CD14-positive monocyte (primary cell): ENCODE measurements at regions of chr9 and their contacts with region 1.

Region 1: DNA sequence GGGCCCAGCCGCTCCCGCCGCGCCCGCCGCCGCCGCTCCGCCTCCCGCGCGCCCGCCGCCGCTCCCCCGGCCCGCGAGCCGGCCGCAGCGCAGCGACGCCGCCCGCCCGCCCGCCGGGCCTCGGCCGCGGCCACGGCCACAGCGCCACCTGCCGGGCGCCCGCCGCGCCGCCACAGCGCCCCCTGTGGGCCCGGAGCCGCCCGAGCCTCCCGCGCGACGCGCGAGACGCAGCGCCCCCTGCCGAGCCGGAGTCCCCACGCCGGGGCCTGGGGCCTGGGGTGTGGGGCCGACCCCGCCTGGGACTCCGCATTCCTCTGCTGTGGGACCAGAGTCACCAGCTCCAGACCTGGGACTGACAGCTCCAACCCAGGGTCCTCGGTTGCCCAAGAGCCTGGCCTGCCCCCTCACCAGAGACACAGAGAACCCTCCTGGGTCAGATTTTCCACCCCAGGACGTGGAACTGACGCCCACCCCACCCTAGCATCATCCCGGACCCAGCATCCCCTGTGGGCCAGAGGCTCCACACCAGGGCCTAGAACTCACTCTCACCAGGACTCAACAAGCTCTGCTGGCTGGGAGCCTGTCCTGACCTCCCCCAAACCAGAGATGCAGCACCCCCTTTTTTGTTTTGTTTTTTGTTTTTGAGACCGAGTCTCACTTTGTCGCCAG is at the start of gene RAPGEF1:
- DNase-seq: peak; percentile 58 to 80 (median 67)
- H3K4me3 ChIP-seq: peak within 1 kb of the TSS; percentile 52 to 86 (median 55)
- H3K4me3 Mint-ChIP-seq: peak within 1 kb of the TSS; percentile 97 to 98
- H3K27ac ChIP-seq: peak within 1 kb of the TSS; percentile 62 to 91
- H3K27ac Mint-ChIP-seq: peak within 1 kb of the TSS; percentile 84 to 95 (median 90)
- H3K4me1 ChIP-seq: peaks cover 64 to 66% of the 10 kb centered on the region in 2 donors
- H3K4me1 Mint-ChIP-seq: peaks cover 61% of the 10 kb centered on the region
- H3K27me3 ChIP-seq: no peaks in the 10 kb centered on the region
- H3K27me3 Mint-ChIP-seq: peaks cover 0 to 5% (median 0%) of the 10 kb centered on the region in 3 donors
- CTCF ChIP-seq: peak; percentile 94
- polyA plus RNA-seq, gene RAPGEF1: 1.7 to 71.7 (median 3.0) TPM

Region 2: GRCh38 chr9:131277910-131278701 is 462.0 kb before region 1 on chr9:
- intact Hi-C with region 1: loop called in 1 of 2 experiments (anchors 10 kb)
- DNase-seq: peak; percentile 67 to 72 (median 71)
- H3K4me3 ChIP-seq: peak overlapping the region; percentile 38 to 94 (median 93)
- H3K4me3 Mint-ChIP-seq: peak overlapping the region; percentile 81 to 82
- H3K27ac ChIP-seq: peak overlapping the region; percentile 76 to 93
- H3K27ac Mint-ChIP-seq: peak overlapping the region; percentile 77 to 93 (median 89)
- H3K4me1 ChIP-seq: peaks cover 43 to 50% of the 10 kb centered on the region in 2 donors
- H3K4me1 Mint-ChIP-seq: peaks cover 49% of the 10 kb centered on the region
- H3K27me3 ChIP-seq: peaks cover 7 to 26% of the 10 kb centered on the region in 2 donors
- H3K27me3 Mint-ChIP-seq: peaks cover 20 to 27% (median 26%) of the 10 kb centered on the region in 3 donors
- CTCF ChIP-seq: no peak

Region 3: GRCh38 chr9:131502781-131503625 is 237.1 kb before region 1 on chr9 and contains the start of gene POMT1:
- intact Hi-C with region 1: loop called (anchors 10 kb)
- DNase-seq: peak; percentile 68 to 74 (median 69)
- H3K4me3 ChIP-seq: peak within 1 kb of the TSS; percentile 47 to 91 (median 77)
- H3K4me3 Mint-ChIP-seq: peak within 1 kb of the TSS; percentile 89 to 98
- H3K27ac ChIP-seq: peak within 1 kb of the TSS in 1 of 2 donors; percentile 43
- H3K27ac Mint-ChIP-seq: peak within 1 kb of the TSS in 4 of 7 donors; percentile 32 to 80 (median 50)
- H3K4me1 ChIP-seq: peaks cover 19 to 24% of the 10 kb centered on the region in 2 donors
- H3K4me1 Mint-ChIP-seq: peaks cover 23% of the 10 kb centered on the region
- H3K27me3 ChIP-seq: peaks cover 2 to 14% of the 10 kb centered on the region in 2 donors
- H3K27me3 Mint-ChIP-seq: peaks cover 13 to 22% (median 22%) of the 10 kb centered on the region in 3 donors
- CTCF ChIP-seq: no peak
- polyA plus RNA-seq, gene POMT1: 5.9 to 22.3 (median 7.5) TPM

Region 4: DNA sequence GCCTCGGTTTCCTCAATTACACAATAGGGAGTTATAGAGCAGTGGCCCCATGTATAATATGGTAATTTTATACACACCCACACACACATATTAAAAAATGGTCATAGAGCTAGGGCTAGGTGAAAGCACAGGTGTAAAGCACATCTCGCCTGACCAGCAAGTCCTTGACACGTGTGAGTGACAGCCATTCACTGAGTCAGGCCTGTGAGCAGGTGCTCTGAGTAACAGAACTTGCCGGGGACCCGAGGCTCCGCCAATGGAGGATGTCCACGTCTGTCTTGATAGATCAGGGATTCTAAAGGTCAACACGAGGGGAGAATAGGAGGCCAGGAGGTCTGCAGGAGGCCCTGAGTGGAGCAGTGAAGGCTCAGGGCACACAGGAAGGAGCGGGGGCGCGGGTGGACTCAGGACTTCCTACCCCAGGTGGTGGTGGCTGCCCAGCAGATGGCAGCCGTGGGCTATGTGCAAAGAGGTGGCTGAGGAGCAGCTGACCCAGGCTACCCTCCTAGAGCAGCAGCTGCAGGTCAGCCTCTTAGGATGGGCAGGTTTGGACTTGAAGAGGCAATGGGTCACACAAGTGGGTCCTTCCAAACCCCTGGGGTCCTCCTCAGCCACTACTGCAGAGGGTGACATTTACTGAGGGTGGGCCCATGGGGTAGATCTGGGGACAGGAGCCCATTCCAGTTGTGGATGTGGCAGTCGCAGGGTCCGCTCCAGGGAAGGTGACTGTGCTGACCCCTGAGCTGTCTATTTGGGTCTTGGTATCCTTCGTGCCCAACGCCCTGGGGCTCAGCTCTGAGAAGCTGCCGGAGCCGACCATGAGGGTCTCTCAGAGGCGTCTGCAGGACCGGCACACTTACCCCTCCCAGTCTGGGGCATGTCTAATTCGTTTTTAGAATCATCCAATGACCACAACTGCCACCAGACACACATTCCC is 148.9 kb before region 1 on chr9:
- intact Hi-C with region 1: loop called (anchors 2 to 5 kb)
- DNase-seq: peak; percentile 81 to 85 (median 83)
- H3K4me3 ChIP-seq: no peak overlapping the region
- H3K4me3 Mint-ChIP-seq: peak overlapping the region; percentile 27 to 51
- H3K27ac ChIP-seq: peak overlapping the region; percentile 17 to 37
- H3K27ac Mint-ChIP-seq: peak overlapping the region in 5 of 7 donors; percentile 74 to 93 (median 84)
- H3K4me1 ChIP-seq: peaks cover 39 to 52% of the 10 kb centered on the region in 2 donors
- H3K4me1 Mint-ChIP-seq: peaks cover 53% of the 10 kb centered on the region
- H3K27me3 ChIP-seq: no peaks in the 10 kb centered on the region
- H3K27me3 Mint-ChIP-seq: peaks cover 0 to 1% (median 0%) of the 10 kb centered on the region in 3 donors
- CTCF ChIP-seq: peak; percentile 87

Region 5: DNA sequence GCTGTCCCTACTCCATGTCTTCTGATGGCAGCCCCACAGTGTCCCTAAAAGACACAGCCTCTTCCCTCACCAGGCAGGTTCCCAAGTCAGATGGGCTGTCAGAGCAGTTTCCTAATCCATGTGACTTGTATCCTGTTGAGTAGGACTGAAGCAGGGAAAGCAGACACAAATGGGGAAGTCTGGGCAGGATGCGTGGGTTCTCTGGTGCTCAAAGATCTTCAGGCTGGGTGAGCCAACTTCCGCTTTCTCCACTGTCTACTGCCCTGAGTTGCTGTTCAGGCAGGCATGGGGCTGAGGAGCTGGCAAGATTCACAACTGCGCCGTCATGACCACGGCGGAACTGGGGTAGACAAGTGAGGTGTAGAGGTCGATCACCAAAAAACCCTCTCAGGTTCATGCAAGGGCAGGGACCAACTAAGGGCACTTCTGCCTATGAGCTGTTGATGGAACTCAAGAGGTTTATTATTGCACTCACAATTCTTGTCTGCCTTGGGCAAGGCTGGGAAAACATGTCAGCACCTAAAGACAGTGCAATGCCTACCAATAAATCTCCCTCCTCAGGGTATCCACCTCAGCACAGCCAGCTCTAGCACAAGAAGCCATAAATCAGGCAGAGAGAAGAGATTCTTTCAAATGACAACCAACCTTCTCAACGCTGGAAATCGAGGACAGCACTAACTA is 83.6 kb before region 1 on chr9:
- intact Hi-C with region 1: loop called in 1 of 2 experiments (anchors 10 kb)
- DNase-seq: peak; percentile 99 to 100 (median 100)
- H3K4me3 ChIP-seq: peak overlapping the region in 1 of 3 experiments; percentile 1
- H3K4me3 Mint-ChIP-seq: peak overlapping the region; percentile 56 to 68
- H3K27ac ChIP-seq: peak overlapping the region; percentile 65 to 98
- H3K27ac Mint-ChIP-seq: peak overlapping the region; percentile 96 to 99 (median 98)
- H3K4me1 ChIP-seq: peaks cover 65 to 81% of the 10 kb centered on the region in 2 donors
- H3K4me1 Mint-ChIP-seq: peaks cover 63% of the 10 kb centered on the region
- H3K27me3 ChIP-seq: no peaks in the 10 kb centered on the region
- H3K27me3 Mint-ChIP-seq: peaks cover 0 to 2% (median 1%) of the 10 kb centered on the region in 3 donors
- CTCF ChIP-seq: no peak

Region 6: GRCh38 chr9:131679261-131680020 is 60.7 kb before region 1 on chr9:
- intact Hi-C with region 1: loop called in 1 of 2 experiments (anchors 10 kb)
- DNase-seq: no peak
- H3K4me3 ChIP-seq: no peak overlapping the region
- H3K4me3 Mint-ChIP-seq: no peak overlapping the region
- H3K27ac ChIP-seq: peak overlapping the region in 1 of 2 donors; percentile 77
- H3K27ac Mint-ChIP-seq: peak overlapping the region in 6 of 7 donors; percentile 53 to 96 (median 89)
- H3K4me1 ChIP-seq: peaks cover 51 to 59% of the 10 kb centered on the region in 2 donors
- H3K4me1 Mint-ChIP-seq: peaks cover 71% of the 10 kb centered on the region
- H3K27me3 ChIP-seq: no peaks in the 10 kb centered on the region
- H3K27me3 Mint-ChIP-seq: peaks cover 0 to 1% (median 0%) of the 10 kb centered on the region in 3 donors
- CTCF ChIP-seq: no peak

Region 7: GRCh38 chr9:131707733-131708157 is 32.4 kb before region 1 on chr9:
- intact Hi-C with region 1: loop called in 1 of 2 experiments (anchors 5 kb)
- DNase-seq: peak; percentile 79 to 89 (median 86)
- H3K4me3 ChIP-seq: peak overlapping the region in 1 of 3 experiments; percentile 24
- H3K4me3 Mint-ChIP-seq: peak overlapping the region; percentile 70 to 79
- H3K27ac ChIP-seq: peak overlapping the region; percentile 79 to 90
- H3K27ac Mint-ChIP-seq: peak overlapping the region; percentile 96 to 99 (median 98)
- H3K4me1 ChIP-seq: peaks cover 77 to 87% of the 10 kb centered on the region in 2 donors
- H3K4me1 Mint-ChIP-seq: peaks cover 86% of the 10 kb centered on the region
- H3K27me3 ChIP-seq: no peaks in the 10 kb centered on the region
- H3K27me3 Mint-ChIP-seq: peaks cover 0 to 1% (median 0%) of the 10 kb centered on the region in 3 donors
- CTCF ChIP-seq: no peak